ENCODE measurements at regions of chr5 and their contacts with region 1.

Region 1: DNA sequence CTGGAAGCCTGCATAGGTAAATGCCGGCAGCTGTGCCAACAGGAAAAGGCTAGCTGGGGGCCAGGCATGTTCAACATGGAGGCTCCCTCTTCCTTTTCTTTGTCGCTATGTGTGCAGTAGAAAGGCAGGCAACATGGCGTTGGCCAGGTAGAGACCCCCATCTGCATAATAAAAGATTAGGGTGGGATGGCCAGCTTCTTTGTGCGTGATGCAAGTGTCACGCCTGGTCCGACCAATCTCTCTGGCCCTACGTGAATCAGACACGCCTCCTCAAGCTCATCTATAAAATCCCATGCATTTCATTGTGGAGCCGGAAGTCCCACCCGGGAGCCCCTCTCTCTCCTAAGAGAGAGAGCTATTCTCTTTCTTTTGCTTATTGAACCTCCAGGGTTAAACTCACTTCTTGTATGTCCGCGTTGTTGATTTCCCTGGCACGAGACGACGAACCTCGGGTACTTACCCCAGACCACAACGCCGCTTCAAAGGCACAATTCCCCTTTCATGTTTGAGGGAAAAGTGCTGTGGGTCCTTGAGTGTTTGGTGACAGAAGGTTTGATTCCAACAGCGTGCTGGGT is 25.0 kb upstream of the C5orf47 start:
- DNase-seq: no peak
- H3K4me3 Mint-ChIP-seq: peak overlapping the region; percentile 67
- H3K27ac Mint-ChIP-seq: no peak overlapping the region
- H3K4me1 Mint-ChIP-seq: peaks cover 15% of the 10 kb centered on the region
- H3K27me3 Mint-ChIP-seq: no peaks in the 10 kb centered on the region
- CTCF ChIP-seq: no peak

Region 2: GRCh38 chr5:173917788-173918786 is 45.9 kb before region 1 on chr5:
- CTCF ChIA-PET with region 1: no interaction called
- POLR2A ChIA-PET with region 1: interaction called, 11 read pairs
- intact Hi-C with region 1: no loop called
- DNase-seq: peak; percentile 94
- H3K4me3 Mint-ChIP-seq: no peak overlapping the region
- H3K27ac Mint-ChIP-seq: no peak overlapping the region
- H3K4me1 Mint-ChIP-seq: peaks cover 8% of the 10 kb centered on the region
- H3K27me3 Mint-ChIP-seq: no peaks in the 10 kb centered on the region
- CTCF ChIP-seq: no peak

Region 3: DNA sequence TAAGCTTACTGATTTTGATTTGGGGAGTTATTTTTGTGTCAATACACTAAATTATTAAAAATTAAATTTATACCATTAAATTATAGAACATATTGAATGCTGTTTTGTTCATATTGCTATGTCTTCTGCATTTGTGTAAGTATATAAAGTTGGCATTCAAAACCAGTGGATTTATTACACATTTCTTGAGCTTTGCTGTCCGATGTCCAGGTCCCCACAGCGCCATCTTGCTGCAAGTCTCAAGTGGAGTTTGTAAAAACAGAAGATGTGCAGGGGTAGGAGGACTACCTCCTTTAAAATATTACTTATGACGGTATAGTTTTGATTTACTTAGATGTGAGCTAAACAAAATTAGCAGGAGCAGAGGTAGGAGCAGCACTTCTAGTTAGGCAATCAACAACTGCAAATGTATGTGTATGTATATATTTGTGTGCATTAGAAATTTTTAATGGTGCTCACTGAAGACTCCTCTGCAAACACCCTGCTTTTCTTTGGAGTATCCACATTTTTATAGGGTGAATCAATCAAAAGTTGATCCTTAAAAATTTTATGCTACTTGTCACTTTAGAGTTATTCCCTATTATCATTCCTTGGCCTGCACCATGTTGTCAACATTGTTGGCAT is 38.4 kb before region 1 on chr5:
- CTCF ChIA-PET with region 1: interaction called, 9 read pairs
- POLR2A ChIA-PET with region 1: interaction called, 10 read pairs
- intact Hi-C with region 1: no loop called
- DNase-seq: peak; percentile 77
- H3K4me3 Mint-ChIP-seq: no peak overlapping the region
- H3K27ac Mint-ChIP-seq: no peak overlapping the region
- H3K4me1 Mint-ChIP-seq: peaks cover 47% of the 10 kb centered on the region
- H3K27me3 Mint-ChIP-seq: no peaks in the 10 kb centered on the region
- CTCF ChIP-seq: peak; percentile 66

Region 4: GRCh38 chr5:173941758-173942401 is 22.1 kb before region 1 on chr5:
- CTCF ChIA-PET with region 1: no interaction called
- POLR2A ChIA-PET with region 1: interaction called, 17 read pairs
- intact Hi-C with region 1: no loop called
- DNase-seq: no peak
- H3K4me3 Mint-ChIP-seq: no peak overlapping the region
- H3K27ac Mint-ChIP-seq: no peak overlapping the region
- H3K4me1 Mint-ChIP-seq: peaks cover 5% of the 10 kb centered on the region
- H3K27me3 Mint-ChIP-seq: no peaks in the 10 kb centered on the region
- CTCF ChIP-seq: no peak

Region 5: DNA sequence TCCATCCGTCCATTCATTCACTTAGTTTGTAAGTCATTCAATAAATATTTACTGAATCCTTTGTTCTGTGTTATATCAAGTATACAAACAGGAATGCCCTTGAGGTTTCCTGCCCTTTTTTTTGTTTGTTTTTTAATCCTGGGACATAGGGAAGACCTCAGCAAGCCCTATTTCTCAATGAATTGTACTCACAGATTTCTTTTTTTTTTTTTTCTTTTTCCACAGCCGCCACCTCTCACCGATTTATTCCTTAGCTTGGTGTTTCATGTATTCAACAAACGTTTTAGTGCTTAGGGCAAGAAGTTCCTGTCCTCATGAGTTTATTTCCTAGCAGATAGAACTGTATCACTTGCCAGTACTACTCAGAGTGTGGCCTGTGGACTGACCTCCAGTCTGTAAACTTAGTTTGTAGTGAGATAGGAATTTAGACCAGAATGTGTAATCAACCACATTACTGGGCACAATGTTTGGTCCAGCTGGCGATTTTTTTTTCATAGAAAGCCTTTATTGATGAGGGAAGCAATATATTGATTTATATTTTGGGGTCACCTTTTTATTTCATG is 10.3 kb before region 1 on chr5:
- CTCF ChIA-PET with region 1: interaction called, 7 read pairs
- POLR2A ChIA-PET with region 1: interaction called, 16 read pairs
- intact Hi-C with region 1: no loop called
- DNase-seq: no peak
- H3K4me3 Mint-ChIP-seq: no peak overlapping the region
- H3K27ac Mint-ChIP-seq: peak overlapping the region; percentile 47
- H3K4me1 Mint-ChIP-seq: no peaks in the 10 kb centered on the region
- H3K27me3 Mint-ChIP-seq: no peaks in the 10 kb centered on the region
- CTCF ChIP-seq: no peak